Naive thymus-derived CD4-positive, alpha-beta T cell (primary cell): ENCODE measurements at regions of chrX and their contacts with region 1.

Region 1: DNA sequence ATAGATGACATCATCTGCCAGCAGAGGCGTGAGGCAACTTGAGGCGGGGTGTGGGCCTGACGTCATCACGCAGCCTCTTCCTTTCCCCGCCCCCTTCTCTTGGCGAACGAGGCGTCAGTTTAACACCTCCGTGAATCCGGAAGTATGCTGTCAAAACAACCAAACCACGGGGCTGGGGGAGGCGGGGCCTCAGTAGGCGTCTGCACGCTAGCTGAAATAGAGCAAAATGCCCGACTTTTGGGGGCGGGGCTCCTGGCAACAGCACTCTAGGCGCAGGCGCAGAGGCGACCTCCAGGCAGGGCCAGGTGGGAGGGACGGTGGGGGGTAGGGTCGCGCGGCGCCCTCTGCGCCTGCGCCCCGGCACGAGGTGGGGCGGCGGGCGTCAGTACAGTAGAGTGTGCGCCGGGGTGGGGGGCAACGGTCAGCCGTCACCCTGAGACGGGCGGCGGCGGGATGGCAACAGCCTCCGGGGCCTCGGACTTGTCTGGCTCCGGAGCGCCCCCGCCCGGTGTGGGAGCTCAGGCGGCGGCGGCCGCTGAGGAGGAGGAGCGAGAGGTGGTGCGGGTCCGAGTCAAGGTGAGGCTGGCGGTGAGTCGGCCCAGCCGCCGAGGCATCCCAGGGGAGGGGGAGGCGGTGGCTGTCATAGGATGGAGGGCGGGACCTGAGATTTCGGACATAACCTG is at the start of gene TBC1D25:
- DNase-seq: peak; percentile 85 to 99 (median 95)
- ATAC-seq: peak; percentile 92
- H3K4me3 ChIP-seq: peak within 1 kb of the TSS; percentile 75
- H3K4me3 Mint-ChIP-seq: peak within 1 kb of the TSS; percentile 80 to 98 (median 90)
- H3K27ac ChIP-seq: peak within 1 kb of the TSS; percentile 91
- H3K27ac Mint-ChIP-seq: peak within 1 kb of the TSS; percentile 90 to 99 (median 96)
- H3K4me1 ChIP-seq: peaks cover 8 to 10% of the 10 kb centered on the region in 2 donors
- H3K4me1 Mint-ChIP-seq: peaks cover 14 to 18% (median 16%) of the 10 kb centered on the region in 7 donors
- H3K27me3 ChIP-seq: no peaks in the 10 kb centered on the region
- H3K27me3 Mint-ChIP-seq: no peaks in the 10 kb centered on the region
- total RNA-seq, gene TBC1D25: 20.2 to 31.2 (median 26.4) TPM

Region 2: DNA sequence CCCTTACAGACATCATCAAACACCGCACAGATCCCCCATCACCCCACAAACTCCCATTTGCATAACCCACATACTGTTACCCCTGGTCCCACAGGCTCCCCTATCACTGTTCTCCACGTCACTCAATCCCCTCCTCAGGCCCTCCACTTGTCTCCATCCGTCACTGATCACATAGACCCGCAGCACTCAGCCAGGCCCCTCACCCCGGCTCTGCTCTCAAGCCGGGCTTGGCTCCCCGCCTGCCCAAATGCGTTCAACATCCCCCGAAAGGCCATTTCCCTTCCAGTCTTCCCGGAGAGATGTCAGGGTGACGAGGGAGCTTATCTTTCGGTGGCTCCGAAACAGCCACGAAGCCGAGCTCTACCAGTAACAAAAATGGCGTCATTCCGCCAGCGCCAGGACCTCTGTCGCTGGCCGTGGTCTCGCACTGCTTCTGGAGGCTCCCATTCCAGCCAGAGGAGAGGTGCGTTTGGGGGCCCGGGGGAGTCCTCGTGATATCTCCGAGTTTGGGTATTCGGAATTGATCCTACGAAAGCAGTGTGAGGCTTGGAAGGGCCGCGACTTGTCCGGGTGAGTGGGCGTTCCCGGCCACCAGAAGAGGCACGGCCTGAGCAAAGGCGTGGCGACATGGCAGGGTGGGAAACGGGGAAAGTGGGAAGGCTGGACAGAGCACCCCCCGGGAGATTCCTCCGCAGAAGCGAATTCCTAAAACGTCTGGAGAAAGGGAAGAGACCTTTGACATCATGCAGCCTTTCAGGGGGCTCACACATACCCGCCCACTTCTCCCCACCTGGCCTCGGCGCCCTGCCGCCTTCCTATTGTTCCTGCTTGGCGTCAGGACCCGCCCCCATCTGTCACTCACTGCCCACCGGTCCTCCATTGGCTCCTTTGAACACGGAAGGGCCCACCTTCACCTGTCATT is 468.2 kb before region 1 on chrX and contains the start of gene ZNF630:
- CTCF ChIA-PET with region 1: no interaction called
- POLR2A ChIA-PET with region 1: no interaction called
- intact Hi-C with region 1: loop called in 1 of 2 experiments (anchors 1 kb)
- DNase-seq: peak; percentile 13 to 49 (median 35)
- ATAC-seq: peak; percentile 86
- H3K4me3 ChIP-seq: peak within 1 kb of the TSS; percentile 79
- H3K4me3 Mint-ChIP-seq: peak within 1 kb of the TSS; percentile 89 to 95 (median 92)
- H3K27ac ChIP-seq: peak within 1 kb of the TSS; percentile 80
- H3K27ac Mint-ChIP-seq: peak within 1 kb of the TSS; percentile 87 to 97 (median 94)
- H3K4me1 ChIP-seq: peaks cover 0 to 4% of the 10 kb centered on the region in 2 donors
- H3K4me1 Mint-ChIP-seq: peaks cover 0 to 26% (median 15%) of the 10 kb centered on the region in 7 donors
- H3K27me3 ChIP-seq: no peaks in the 10 kb centered on the region
- H3K27me3 Mint-ChIP-seq: no peaks in the 10 kb centered on the region
- total RNA-seq, gene ZNF630: 0.53 to 5.1 (median 2.2) TPM

Region 3: GRCh38 chrX:48508400-48509244 is 30.9 kb before region 1 on chrX and contains the start of gene PORCN:
- CTCF ChIA-PET with region 1: no interaction called
- POLR2A ChIA-PET with region 1: interaction called, 8 read pairs
- intact Hi-C with region 1: loop called (anchors 1 kb)
- DNase-seq: peak; percentile 50 to 81 (median 66)
- ATAC-seq: peak; percentile 96
- H3K4me3 ChIP-seq: peak within 1 kb of the TSS; percentile 71
- H3K4me3 Mint-ChIP-seq: peak within 1 kb of the TSS; percentile 82 to 95 (median 91)
- H3K27ac ChIP-seq: peak within 1 kb of the TSS; percentile 85
- H3K27ac Mint-ChIP-seq: peak within 1 kb of the TSS; percentile 78 to 93 (median 88)
- H3K4me1 ChIP-seq: peaks cover 4 to 8% of the 10 kb centered on the region in 2 donors
- H3K4me1 Mint-ChIP-seq: peaks cover 10 to 28% (median 16%) of the 10 kb centered on the region in 7 donors
- H3K27me3 ChIP-seq: no peaks in the 10 kb centered on the region
- H3K27me3 Mint-ChIP-seq: no peaks in the 10 kb centered on the region
- total RNA-seq, gene PORCN: 13.1 to 19.0 (median 16.8) TPM

Region 4: DNA sequence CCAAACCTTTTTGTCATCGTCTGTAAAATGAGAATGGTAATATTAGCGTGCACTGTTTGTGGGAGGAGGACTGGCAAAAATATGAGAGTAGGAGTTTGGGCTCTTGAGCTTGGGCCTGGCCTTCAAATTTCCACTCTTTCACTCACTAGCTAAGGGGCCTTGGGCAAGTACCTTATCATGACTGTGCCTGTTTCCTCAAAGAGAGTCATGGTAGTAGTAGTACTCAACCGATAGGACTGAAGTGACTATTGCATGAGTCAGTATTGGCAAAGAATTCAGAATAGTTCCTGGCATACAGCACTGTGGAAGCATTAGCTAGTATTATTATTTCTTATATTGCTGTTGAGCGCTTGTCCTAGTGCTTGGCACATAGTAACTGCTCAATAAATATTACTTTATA is 18.8 kb after region 1 on chrX:
- CTCF ChIA-PET with region 1: no interaction called
- POLR2A ChIA-PET with region 1: no interaction called
- intact Hi-C with region 1: no loop called
- DNase-seq: no peak
- ATAC-seq: no peak
- H3K4me3 ChIP-seq: no peak overlapping the region
- H3K4me3 Mint-ChIP-seq: no peak overlapping the region
- H3K27ac ChIP-seq: no peak overlapping the region
- H3K27ac Mint-ChIP-seq: peak overlapping the region in 1 of 9 donors; percentile 43
- H3K4me1 ChIP-seq: no peaks in the 10 kb centered on the region
- H3K4me1 Mint-ChIP-seq: peaks cover 0 to 6% (median 0%) of the 10 kb centered on the region in 7 donors
- H3K27me3 ChIP-seq: no peaks in the 10 kb centered on the region
- H3K27me3 Mint-ChIP-seq: no peaks in the 10 kb centered on the region

Region 5: GRCh38 chrX:48574270-48575266 is 35.1 kb after region 1 on chrX and contains the start of gene RBM3:
- CTCF ChIA-PET with region 1: no interaction called
- POLR2A ChIA-PET with region 1: interaction called, 22 read pairs
- intact Hi-C with region 1: loop called (anchors 1 kb)
- DNase-seq: peak; percentile 64 to 96 (median 92)
- ATAC-seq: peak; percentile 94
- H3K4me3 ChIP-seq: peak within 1 kb of the TSS; percentile 68
- H3K4me3 Mint-ChIP-seq: peak within 1 kb of the TSS; percentile 88 to 100 (median 97)
- H3K27ac ChIP-seq: peak within 1 kb of the TSS; percentile 99
- H3K27ac Mint-ChIP-seq: peak within 1 kb of the TSS; percentile 95 to 100 (median 99)
- H3K4me1 ChIP-seq: peaks cover 16 to 20% of the 10 kb centered on the region in 2 donors
- H3K4me1 Mint-ChIP-seq: peaks cover 6 to 32% (median 25%) of the 10 kb centered on the region in 7 donors
- H3K27me3 ChIP-seq: no peaks in the 10 kb centered on the region
- H3K27me3 Mint-ChIP-seq: no peaks in the 10 kb centered on the region
- total RNA-seq, gene RBM3: 176 to 374 (median 329) TPM